CD8-positive, alpha-beta T cell (primary cell): ENCODE measurements at regions of chrX and their contacts with region 1.

Region 1: GRCh38 chrX:78387364-78387763 is 60.0 kb upstream of the CYSLTR1 start:
- DNase-seq: no peak
- ATAC-seq: no peak
- H3K4me3 ChIP-seq: no peak overlapping the region
- H3K4me3 Mint-ChIP-seq: no peak overlapping the region
- H3K27ac ChIP-seq: no peak overlapping the region
- H3K27ac Mint-ChIP-seq: no peak overlapping the region
- H3K4me1 ChIP-seq: no peaks in the 10 kb centered on the region
- H3K4me1 Mint-ChIP-seq: no peaks in the 10 kb centered on the region
- H3K27me3 ChIP-seq: no peaks in the 10 kb centered on the region
- H3K27me3 Mint-ChIP-seq: no peaks in the 10 kb centered on the region
- CTCF ChIP-seq: no peak

Region 2: GRCh38 chrX:78048052-78048451 is 339.3 kb before region 1 on chrX:
- CTCF ChIA-PET with region 1: no interaction called
- POLR2A ChIA-PET with region 1: no interaction called
- intact Hi-C with region 1: no loop called
- DNase-seq: no peak
- ATAC-seq: no peak
- H3K4me3 ChIP-seq: no peak overlapping the region
- H3K4me3 Mint-ChIP-seq: no peak overlapping the region
- H3K27ac ChIP-seq: no peak overlapping the region
- H3K27ac Mint-ChIP-seq: no peak overlapping the region
- H3K4me1 ChIP-seq: no peaks in the 10 kb centered on the region
- H3K4me1 Mint-ChIP-seq: no peaks in the 10 kb centered on the region
- H3K27me3 ChIP-seq: no peaks in the 10 kb centered on the region
- H3K27me3 Mint-ChIP-seq: no peaks in the 10 kb centered on the region
- CTCF ChIP-seq: no peak

Region 3: DNA sequence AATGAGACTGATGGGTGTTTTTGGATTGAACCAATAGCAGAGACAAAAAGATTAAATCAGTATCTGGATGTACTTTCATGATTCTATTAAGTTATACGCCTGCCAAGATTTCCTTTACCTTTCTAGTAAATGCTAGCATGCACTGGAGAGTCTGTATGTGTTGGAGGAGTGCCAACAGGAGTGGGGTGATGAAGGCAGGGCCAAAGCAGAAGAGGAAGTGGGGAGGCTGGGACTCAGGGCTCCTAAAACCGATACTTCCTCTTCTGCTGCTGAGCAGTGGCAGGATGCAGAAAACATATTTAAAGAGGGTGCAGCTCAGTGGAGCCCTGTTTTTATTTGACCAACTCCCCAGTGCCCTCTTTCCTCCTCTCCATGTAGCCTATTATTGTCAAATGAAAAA is 65.6 kb before region 1 on chrX:
- CTCF ChIA-PET with region 1: no interaction called
- POLR2A ChIA-PET with region 1: no interaction called
- intact Hi-C with region 1: loop called in 1 of 2 experiments (anchors 10 kb)
- DNase-seq: peak in 8 of 9 experiments; percentile 29 to 77 (median 48)
- ATAC-seq: peak; percentile 80
- H3K4me3 ChIP-seq: no peak overlapping the region
- H3K4me3 Mint-ChIP-seq: no peak overlapping the region
- H3K27ac ChIP-seq: no peak overlapping the region
- H3K27ac Mint-ChIP-seq: peak overlapping the region; percentile 73
- H3K4me1 ChIP-seq: peaks cover 26% of the 10 kb centered on the region
- H3K4me1 Mint-ChIP-seq: peaks cover 25% of the 10 kb centered on the region
- H3K27me3 ChIP-seq: no peaks in the 10 kb centered on the region
- H3K27me3 Mint-ChIP-seq: no peaks in the 10 kb centered on the region
- CTCF ChIP-seq: no peak

Region 4: GRCh38 chrX:78573630-78574029 is 186.3 kb after region 1 on chrX:
- CTCF ChIA-PET with region 1: no interaction called
- POLR2A ChIA-PET with region 1: no interaction called
- intact Hi-C with region 1: no loop called
- DNase-seq: no peak
- ATAC-seq: no peak
- H3K4me3 ChIP-seq: no peak overlapping the region
- H3K4me3 Mint-ChIP-seq: no peak overlapping the region
- H3K27ac ChIP-seq: no peak overlapping the region
- H3K27ac Mint-ChIP-seq: no peak overlapping the region
- H3K4me1 ChIP-seq: no peaks in the 10 kb centered on the region
- H3K4me1 Mint-ChIP-seq: peaks cover 3% of the 10 kb centered on the region
- H3K27me3 ChIP-seq: no peaks in the 10 kb centered on the region
- H3K27me3 Mint-ChIP-seq: no peaks in the 10 kb centered on the region
- CTCF ChIP-seq: no peak